HepG2 (cell line): ENCODE measurements at regions of chr1 and their contacts with region 1.

Region 1: GRCh38 chr1:194102606-194103005 is 916.2 kb upstream of the B3GALT2 start:
- DNase-seq: peak; percentile 2
- ATAC-seq: peak; percentile 60
- H3K4me3 ChIP-seq: no peak overlapping the region
- H3K27ac ChIP-seq: no peak overlapping the region
- H3K4me1 ChIP-seq: peaks cover 9% of the 10 kb centered on the region
- H3K27me3 ChIP-seq: no peaks in the 10 kb centered on the region
- CTCF ChIP-seq: peak; percentile 24; the same call in 1 of the 2 replicates
- EP300 ChIP-seq: no peak
- POLR2A ChIP-seq: no peak
- RAD21 ChIP-seq: no peak

Region 2: GRCh38 chr1:194117582-194117981 is 15.0 kb after region 1 on chr1:
- CTCF ChIA-PET with region 1: no interaction called
- POLR2A ChIA-PET with region 1: no interaction called
- in situ Hi-C with region 1: no loop called
- intact Hi-C with region 1: loop called (anchors 1 kb)
- DNase-seq: peak; percentile 37
- ATAC-seq: peak; percentile 100
- H3K4me3 ChIP-seq: no peak overlapping the region; a peak in 1 of 6 replicates
- H3K27ac ChIP-seq: no peak overlapping the region
- H3K4me1 ChIP-seq: no peaks in the 10 kb centered on the region
- H3K27me3 ChIP-seq: no peaks in the 10 kb centered on the region
- CTCF ChIP-seq: peak; percentile 46
- EP300 ChIP-seq: no peak
- POLR2A ChIP-seq: no peak
- RAD21 ChIP-seq: no peak